ENCODE measurements at regions of chr17 and their contacts with region 1.

Region 1: GRCh38 chr17:21098934-21099689 is 27.7 kb upstream of the DHRS7B start:
- DNase-seq: peak; percentile 95
- ATAC-seq: peak; percentile 99
- H3K4me3 ChIP-seq: peak overlapping the region; percentile 88
- H3K27ac ChIP-seq: peak overlapping the region; percentile 61
- H3K4me1 ChIP-seq: peaks cover 6% of the 10 kb centered on the region
- H3K27me3 ChIP-seq: no peaks in the 10 kb centered on the region
- CTCF ChIP-seq: no peak

Region 2: GRCh38 chr17:21289901-21290571 is 190.9 kb after region 1 on chr17:
- CTCF ChIA-PET with region 1: no interaction called
- POLR2A ChIA-PET with region 1: interaction called, 17 read pairs
- intact Hi-C with region 1: no loop called
- DNase-seq: no peak
- ATAC-seq: no peak
- H3K4me3 ChIP-seq: no peak overlapping the region
- H3K27ac ChIP-seq: no peak overlapping the region
- H3K4me1 ChIP-seq: peaks cover 35% of the 10 kb centered on the region
- H3K27me3 ChIP-seq: peaks cover 5% of the 10 kb centered on the region; the same call in 1 of the 2 replicates
- CTCF ChIP-seq: no peak

Measured in PC-3 (cell line).